ENCODE measurements at regions of chr15 and their contacts with region 1.

Region 1: GRCh38 chr15:75307778-75308391 is 25.2 kb downstream of the GOLGA6D start:
- DNase-seq: peak in 1 of 5 donors; percentile 36
- ATAC-seq: peak; percentile 20 to 69 (median 56)
- H3K4me3 ChIP-seq: no peak overlapping the region
- H3K27ac ChIP-seq: no peak overlapping the region
- H3K4me1 ChIP-seq: no peaks in the 10 kb centered on the region
- H3K27me3 ChIP-seq: peaks cover 0 to 45% (median 11%) of the 10 kb centered on the region in 9 donors
- CTCF ChIP-seq: peak in 7 of 12 donors; percentile 9 to 33 (median 10)
- POLR2A ChIP-seq: no peak

Region 2: GRCh38 chr15:74062671-74063070 is 1245.2 kb before region 1 on chr15:
- intact Hi-C with region 1: loop called in 2 of 10 experiments (anchors 10 kb)
- DNase-seq: no peak
- ATAC-seq: no peak
- H3K4me3 ChIP-seq: no peak overlapping the region
- H3K27ac ChIP-seq: no peak overlapping the region
- H3K4me1 ChIP-seq: no peaks in the 10 kb centered on the region
- H3K27me3 ChIP-seq: no peaks in the 10 kb centered on the region
- CTCF ChIP-seq: no peak
- POLR2A ChIP-seq: no peak

Region 3: DNA sequence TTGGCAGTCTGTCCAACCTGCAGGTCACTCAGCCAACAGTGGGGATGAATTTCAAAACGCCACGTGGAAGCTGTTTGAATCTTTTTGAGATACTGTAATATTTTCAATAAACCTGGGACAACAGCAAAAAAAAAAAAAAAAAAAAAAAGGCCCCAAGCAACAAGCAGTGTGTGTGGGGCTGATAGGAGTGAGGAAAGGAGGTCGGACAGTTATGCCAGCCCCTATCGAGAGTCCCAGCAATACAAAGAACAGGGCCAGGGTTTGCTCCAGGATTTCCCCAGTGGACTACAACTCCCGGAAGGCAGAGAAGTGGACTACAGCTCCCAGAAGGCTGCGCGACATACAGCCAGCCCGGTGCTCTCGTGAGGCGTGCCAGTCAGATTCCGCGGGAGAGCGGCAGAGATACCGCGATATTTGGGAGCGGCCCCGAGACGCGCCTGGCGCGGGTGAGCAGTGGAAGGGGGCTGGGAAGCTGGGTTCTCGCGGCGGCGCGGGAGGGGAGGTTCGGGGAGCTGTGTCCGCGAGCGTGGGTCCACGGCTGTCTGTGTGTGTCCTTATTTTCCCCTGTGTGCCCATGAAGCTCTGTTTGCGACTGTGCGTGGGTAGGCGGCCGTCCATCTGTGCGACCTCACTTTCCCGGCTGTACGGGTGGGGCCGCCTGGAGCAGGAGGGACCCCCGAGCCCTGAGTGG is 284.6 kb before region 1 on chr15 and contains the start of gene PPCDC:
- intact Hi-C with region 1: loop called in 5 of 10 experiments (anchors 10 kb)
- DNase-seq: peak; percentile 97 to 98 (median 98)
- ATAC-seq: peak; percentile 98 to 99 (median 99)
- H3K4me3 ChIP-seq: peak within 1 kb of the TSS; percentile 38 to 98 (median 87)
- H3K27ac ChIP-seq: peak within 1 kb of the TSS; percentile 39 to 96 (median 90)
- H3K4me1 ChIP-seq: peaks cover 0 to 28% (median 10%) of the 10 kb centered on the region in 12 donors
- H3K27me3 ChIP-seq: no peaks in the 10 kb centered on the region
- CTCF ChIP-seq: peak in 1 of 12 donors; percentile 7
- POLR2A ChIP-seq: peak; percentile 50 to 94
- total RNA-seq, gene PPCDC: 3.6 to 13.0 (median 4.9) TPM

Region 4: GRCh38 chr15:75029378-75030022 is 278.4 kb before region 1 on chr15:
- intact Hi-C with region 1: loop called in 6 of 10 experiments (anchors 10 kb)
- DNase-seq: peak; percentile 91 to 96 (median 92)
- ATAC-seq: peak; percentile 84 to 88 (median 86)
- H3K4me3 ChIP-seq: peak overlapping the region in 9 of 12 donors; percentile 21 to 46 (median 31)
- H3K27ac ChIP-seq: peak overlapping the region; percentile 37 to 87 (median 80)
- H3K4me1 ChIP-seq: peaks cover 9 to 72% (median 33%) of the 10 kb centered on the region in 12 donors
- H3K27me3 ChIP-seq: no peaks in the 10 kb centered on the region
- CTCF ChIP-seq: peak; percentile 90 to 96 (median 94)
- POLR2A ChIP-seq: peak in 1 of 2 donors; percentile 14

Region 5: GRCh38 chr15:75215107-75216004 is 92.5 kb before region 1 on chr15:
- intact Hi-C with region 1: no loop called
- DNase-seq: no peak
- ATAC-seq: peak in 2 of 4 donors; percentile 8 to 14
- H3K4me3 ChIP-seq: no peak overlapping the region
- H3K27ac ChIP-seq: no peak overlapping the region
- H3K4me1 ChIP-seq: peaks cover 0 to 32% (median 18%) of the 10 kb centered on the region in 12 donors
- H3K27me3 ChIP-seq: no peaks in the 10 kb centered on the region
- CTCF ChIP-seq: no peak
- POLR2A ChIP-seq: no peak

Region 6: DNA sequence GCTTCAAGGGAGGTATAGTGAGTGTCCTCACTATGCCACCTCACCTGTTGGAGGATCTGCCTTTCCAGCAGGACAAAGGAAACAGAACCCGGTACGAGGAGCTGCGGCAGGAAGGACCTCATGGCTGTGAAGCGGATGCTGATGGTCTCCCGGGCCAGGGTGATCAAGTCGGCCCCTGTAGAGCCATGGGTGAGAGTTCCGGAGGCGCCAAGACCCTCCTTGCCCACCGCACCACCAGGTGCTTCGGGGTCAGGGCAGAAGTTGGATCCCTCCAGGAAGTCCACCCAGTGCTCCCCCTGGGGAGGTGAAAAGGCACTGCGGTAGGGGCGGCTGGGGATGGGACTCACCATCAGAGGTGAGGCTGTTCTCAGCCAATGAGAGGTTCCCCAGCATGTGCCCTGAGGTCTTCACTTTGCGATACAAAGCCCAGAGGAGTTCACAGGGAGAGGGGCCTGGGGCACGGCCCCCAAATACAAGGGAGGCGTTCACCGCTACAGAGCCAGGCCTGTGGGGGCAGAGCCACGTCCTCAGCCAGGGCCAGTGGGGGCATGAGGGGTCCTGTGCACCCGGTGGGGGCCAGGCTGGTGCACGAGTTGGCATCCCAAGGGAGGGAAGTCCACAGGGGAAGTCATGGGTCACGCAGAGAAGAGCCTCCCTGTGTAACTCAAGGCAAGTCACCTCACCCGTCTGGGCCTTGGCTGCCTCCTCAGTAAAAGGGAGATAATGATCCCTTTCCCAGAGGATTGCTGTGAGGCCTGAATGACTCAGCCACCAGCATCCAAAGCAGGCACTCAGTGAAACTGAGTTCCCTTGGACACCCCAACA is 78.5 kb before region 1 on chr15:
- intact Hi-C with region 1: loop called in 2 of 10 experiments (anchors 10 kb)
- DNase-seq: peak in 1 of 5 donors; percentile 13
- ATAC-seq: no peak
- H3K4me3 ChIP-seq: no peak overlapping the region
- H3K27ac ChIP-seq: no peak overlapping the region
- H3K4me1 ChIP-seq: peaks cover 0 to 8% (median 0%) of the 10 kb centered on the region in 12 donors
- H3K27me3 ChIP-seq: peaks cover 0 to 10% (median 0%) of the 10 kb centered on the region in 9 donors
- CTCF ChIP-seq: no peak
- POLR2A ChIP-seq: no peak

Measured in heart left ventricle (tissue), 16 donors.